MCF 10A (cell line): ENCODE measurements at regions of chr7 and their contacts with region 1.

Region 1: GRCh38 chr7:144854839-144855424 is 19.1 kb upstream of the TPK1 start:
- DNase-seq: peak; percentile 60
- H3K4me3 Mint-ChIP-seq: no peak overlapping the region
- H3K27ac Mint-ChIP-seq: no peak overlapping the region
- H3K4me1 Mint-ChIP-seq: peaks cover 11% of the 10 kb centered on the region
- H3K27me3 Mint-ChIP-seq: no peaks in the 10 kb centered on the region
- CTCF ChIP-seq: peak; percentile 59

Region 2: GRCh38 chr7:144656965-144657517 is 197.9 kb before region 1 on chr7:
- CTCF ChIA-PET with region 1: no interaction called
- POLR2A ChIA-PET with region 1: no interaction called
- intact Hi-C with region 1: no loop called
- DNase-seq: no peak
- H3K4me3 Mint-ChIP-seq: no peak overlapping the region
- H3K27ac Mint-ChIP-seq: no peak overlapping the region
- H3K4me1 Mint-ChIP-seq: no peaks in the 10 kb centered on the region
- H3K27me3 Mint-ChIP-seq: no peaks in the 10 kb centered on the region
- CTCF ChIP-seq: no peak

Region 3: DNA sequence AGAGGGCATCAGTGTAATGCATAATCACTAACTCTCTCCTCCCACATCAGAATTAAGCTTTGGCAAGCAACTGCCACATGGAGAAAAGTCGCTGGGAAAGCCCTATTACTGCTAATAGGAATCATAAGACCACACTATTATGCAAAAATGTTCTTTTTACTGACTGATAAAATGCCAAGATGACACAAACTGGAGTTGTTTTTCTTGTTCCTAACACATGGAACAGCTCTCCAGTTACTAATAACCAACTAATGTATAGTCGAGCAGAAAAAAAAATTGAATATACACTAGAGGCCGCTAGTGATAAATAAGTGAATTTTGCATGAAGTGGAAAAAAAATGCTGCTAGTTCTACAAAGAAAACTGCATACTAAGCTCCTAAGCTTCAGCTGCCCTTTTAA is 184.7 kb before region 1 on chr7:
- CTCF ChIA-PET with region 1: interaction called, 4 read pairs
- POLR2A ChIA-PET with region 1: no interaction called
- intact Hi-C with region 1: loop called (anchors 5 kb)
- DNase-seq: peak; percentile 33
- H3K4me3 Mint-ChIP-seq: no peak overlapping the region
- H3K27ac Mint-ChIP-seq: no peak overlapping the region
- H3K4me1 Mint-ChIP-seq: peaks cover 19% of the 10 kb centered on the region
- H3K27me3 Mint-ChIP-seq: no peaks in the 10 kb centered on the region
- CTCF ChIP-seq: peak; percentile 34

Region 4: GRCh38 chr7:144835652-144836544 is 19.0 kb before region 1 on chr7 and contains the start of gene TPK1:
- CTCF ChIA-PET with region 1: interaction called, 10 read pairs
- POLR2A ChIA-PET with region 1: no interaction called
- intact Hi-C with region 1: no loop called
- DNase-seq: peak; percentile 91
- H3K4me3 Mint-ChIP-seq: peak within 1 kb of the TSS; percentile 98
- H3K27ac Mint-ChIP-seq: peak within 1 kb of the TSS; percentile 95
- H3K4me1 Mint-ChIP-seq: peaks cover under 1% of the 10 kb centered on the region
- H3K27me3 Mint-ChIP-seq: no peaks in the 10 kb centered on the region
- CTCF ChIP-seq: no peak
- total RNA-seq, gene TPK1: 8.8 TPM in 2 replicates

Region 5: DNA sequence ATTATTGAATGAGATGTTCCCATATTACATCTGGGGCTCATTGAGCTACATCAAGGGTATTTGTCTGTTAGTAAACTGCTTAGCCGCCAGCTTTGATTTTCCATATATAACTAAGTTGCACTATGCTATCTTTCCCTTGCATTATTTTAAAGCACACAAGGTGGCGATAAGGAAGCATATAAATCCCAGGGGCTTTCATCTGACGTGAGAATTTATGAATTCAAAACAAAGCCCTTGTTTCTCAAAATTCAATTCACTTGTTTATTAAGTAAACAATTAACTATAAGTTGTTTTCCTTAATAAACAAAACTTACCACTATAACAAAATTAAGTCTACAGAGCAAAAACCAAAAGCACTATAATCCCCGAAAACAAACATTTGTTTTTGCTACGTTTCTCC is 315.0 kb after region 1 on chr7:
- CTCF ChIA-PET with region 1: interaction called, 5 read pairs
- POLR2A ChIA-PET with region 1: no interaction called
- intact Hi-C with region 1: loop called (anchors 5 kb)
- DNase-seq: peak; percentile 49
- H3K4me3 Mint-ChIP-seq: no peak overlapping the region
- H3K27ac Mint-ChIP-seq: peak overlapping the region; percentile 20
- H3K4me1 Mint-ChIP-seq: peaks cover 17% of the 10 kb centered on the region
- H3K27me3 Mint-ChIP-seq: no peaks in the 10 kb centered on the region
- CTCF ChIP-seq: peak; percentile 43